CD8-positive, alpha-beta T cell (primary cell): ENCODE measurements at regions of chrX and their contacts with region 1.

Region 1: GRCh38 chrX:153724252-153725040 is at the starts of genes ABCD1 and BCAP31:
- DNase-seq: peak; percentile 78 to 92 (median 86)
- ATAC-seq: peak; percentile 78
- H3K4me3 ChIP-seq: peak within 1 kb of the TSS; percentile 59 to 63
- H3K4me3 Mint-ChIP-seq: peak within 1 kb of the TSS; percentile 84
- H3K27ac ChIP-seq: peak within 1 kb of the TSS; percentile 64 to 81
- H3K27ac Mint-ChIP-seq: peak within 1 kb of the TSS; percentile 83
- H3K4me1 ChIP-seq: peaks cover 31% of the 10 kb centered on the region
- H3K4me1 Mint-ChIP-seq: peaks cover 33% of the 10 kb centered on the region
- H3K27me3 ChIP-seq: no peaks in the 10 kb centered on the region
- H3K27me3 Mint-ChIP-seq: no peaks in the 10 kb centered on the region
- CTCF ChIP-seq: no peak
- total RNA-seq, gene ABCD1: 5.2 to 6.4 TPM
- total RNA-seq, gene BCAP31: 35.3 to 39.1 TPM

Region 2: GRCh38 chrX:153687121-153688039 is 37.1 kb before region 1 on chrX and contains the start of gene SLC6A8:
- CTCF ChIA-PET with region 1: no interaction called
- POLR2A ChIA-PET with region 1: no interaction called
- intact Hi-C with region 1: loop called in 1 of 2 experiments (anchors 2 kb)
- DNase-seq: peak in 5 of 9 experiments; percentile 13 to 55 (median 39)
- ATAC-seq: peak; percentile 41
- H3K4me3 ChIP-seq: peak within 1 kb of the TSS in 1 of 2 experiments; percentile 22
- H3K4me3 Mint-ChIP-seq: peak within 1 kb of the TSS; percentile 77
- H3K27ac ChIP-seq: no peak within 1 kb of the TSS
- H3K27ac Mint-ChIP-seq: no peak within 1 kb of the TSS
- H3K4me1 ChIP-seq: no peaks in the 10 kb centered on the region
- H3K4me1 Mint-ChIP-seq: no peaks in the 10 kb centered on the region
- H3K27me3 ChIP-seq: no peaks in the 10 kb centered on the region
- H3K27me3 Mint-ChIP-seq: peaks cover 9% of the 10 kb centered on the region
- CTCF ChIP-seq: no peak
- total RNA-seq, gene SLC6A8: 2.7 to 2.9 TPM

Region 3: DNA sequence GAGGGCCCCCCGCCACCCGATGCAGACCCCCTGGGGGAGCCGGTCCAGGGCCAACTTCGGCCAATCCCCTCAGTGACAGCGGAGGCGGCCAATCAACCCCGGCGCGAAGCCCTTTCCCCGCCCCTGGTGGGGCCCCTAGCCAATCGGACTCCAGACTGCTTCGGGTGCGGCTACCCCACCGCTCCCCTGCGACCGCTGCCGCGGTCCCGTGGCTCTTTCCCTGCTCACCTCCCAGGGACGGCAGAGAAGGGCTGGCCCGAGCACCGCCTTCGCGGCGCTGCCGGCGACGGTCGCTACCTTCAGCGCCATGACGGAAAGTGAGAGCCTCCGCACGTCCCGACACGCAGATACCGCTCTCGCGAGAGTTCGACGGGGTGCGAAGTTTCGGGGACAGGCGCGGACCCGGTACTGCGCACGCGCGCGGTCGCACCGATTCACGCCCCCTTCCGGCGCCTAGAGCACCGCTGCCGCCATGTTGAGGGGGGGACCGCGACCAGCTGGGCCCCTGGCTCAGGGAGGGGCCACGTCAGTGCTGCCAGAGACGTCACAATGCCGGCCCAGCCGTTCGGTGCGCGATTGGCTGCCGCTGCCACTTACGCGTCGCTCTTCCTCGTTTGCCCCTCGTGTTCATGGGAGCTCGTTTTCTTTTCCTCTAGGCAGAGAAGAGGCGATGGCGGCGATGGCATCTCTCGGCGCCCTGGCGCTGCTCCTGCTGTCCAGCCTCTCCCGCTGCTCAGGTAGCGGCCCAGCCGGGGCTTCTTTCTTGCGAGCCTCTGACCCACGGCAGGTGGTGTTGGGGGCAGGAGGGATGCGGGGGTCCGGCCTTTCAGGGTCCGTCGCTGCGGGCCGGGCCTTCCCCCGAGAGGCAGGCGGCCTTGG is 69.8 kb after region 1 on chrX and contains the starts of genes IDH3G and SSR4:
- CTCF ChIA-PET with region 1: no interaction called
- POLR2A ChIA-PET with region 1: no interaction called
- intact Hi-C with region 1: loop called (anchors 1 kb)
- DNase-seq: peak; percentile 84 to 96 (median 90)
- ATAC-seq: peak; percentile 92
- H3K4me3 ChIP-seq: peak within 1 kb of the TSS; percentile 83 to 86
- H3K4me3 Mint-ChIP-seq: peak within 1 kb of the TSS; percentile 90
- H3K27ac ChIP-seq: peak within 1 kb of the TSS; percentile 92 to 95
- H3K27ac Mint-ChIP-seq: peak within 1 kb of the TSS; percentile 95
- H3K4me1 ChIP-seq: peaks cover 34% of the 10 kb centered on the region
- H3K4me1 Mint-ChIP-seq: peaks cover 30% of the 10 kb centered on the region
- H3K27me3 ChIP-seq: no peaks in the 10 kb centered on the region
- H3K27me3 Mint-ChIP-seq: no peaks in the 10 kb centered on the region
- CTCF ChIP-seq: no peak
- total RNA-seq, gene IDH3G: 55.8 to 56.5 TPM
- total RNA-seq, gene SSR4: 175 TPM

Region 4: DNA sequence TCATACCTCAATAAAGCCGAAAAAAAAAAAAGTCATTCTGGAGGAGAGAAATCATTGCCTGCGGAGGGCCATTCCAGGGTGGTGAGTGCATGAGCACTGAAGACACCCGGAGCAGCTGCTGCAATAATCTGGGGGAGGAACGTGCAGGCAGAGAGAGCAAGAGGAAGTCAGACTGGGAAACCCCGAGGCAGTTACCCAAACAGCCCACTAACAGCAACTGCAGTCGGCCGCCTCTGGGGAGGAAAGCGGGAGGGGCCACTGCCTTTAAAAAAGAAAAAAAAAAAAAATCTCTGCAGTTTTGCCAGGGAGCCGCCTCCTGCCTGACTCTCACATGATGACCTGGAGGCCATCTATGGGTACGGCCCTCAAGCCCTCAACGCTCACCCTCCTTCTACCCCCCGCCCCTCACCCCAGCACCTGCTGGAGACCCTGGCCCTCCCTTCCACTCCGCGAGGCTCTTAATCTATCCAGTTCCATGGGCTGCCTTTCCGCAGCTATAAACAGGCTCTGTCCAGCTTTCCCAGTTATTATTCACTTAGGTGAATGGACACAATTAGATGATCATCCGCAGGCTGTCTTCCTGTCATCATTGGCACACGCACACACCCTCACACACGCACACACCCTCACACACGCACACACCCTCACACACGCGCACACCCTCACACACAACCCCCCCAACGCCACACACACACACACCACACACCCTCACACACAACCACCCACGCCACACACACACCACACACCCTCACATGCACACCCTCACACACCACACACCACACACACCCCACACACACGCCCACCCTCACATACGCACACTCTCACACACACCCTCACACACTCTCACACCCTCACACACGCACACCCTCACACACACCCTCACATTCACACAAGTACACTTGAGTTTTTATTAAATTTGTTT is 176.6 kb after region 1 on chrX:
- CTCF ChIA-PET with region 1: no interaction called
- POLR2A ChIA-PET with region 1: no interaction called
- intact Hi-C with region 1: no loop called
- DNase-seq: peak; percentile 24 to 87 (median 58)
- ATAC-seq: peak; percentile 87
- H3K4me3 ChIP-seq: no peak overlapping the region
- H3K4me3 Mint-ChIP-seq: peak overlapping the region; percentile 46
- H3K27ac ChIP-seq: no peak overlapping the region
- H3K27ac Mint-ChIP-seq: no peak overlapping the region
- H3K4me1 ChIP-seq: peaks cover 55% of the 10 kb centered on the region
- H3K4me1 Mint-ChIP-seq: peaks cover 42% of the 10 kb centered on the region
- H3K27me3 ChIP-seq: no peaks in the 10 kb centered on the region
- H3K27me3 Mint-ChIP-seq: no peaks in the 10 kb centered on the region
- CTCF ChIP-seq: no peak